ENCODE measurements at regions of chr9 and their contacts with region 1.

Region 1: GRCh38 chr9:124126571-124127289 is 115.2 kb downstream of the LHX2 start:
- DNase-seq: peak; percentile 43
- ATAC-seq: peak; percentile 85
- H3K4me3 ChIP-seq: no peak overlapping the region
- H3K27ac ChIP-seq: no peak overlapping the region
- H3K4me1 ChIP-seq: peaks cover 8% of the 10 kb centered on the region; the same call in 1 of the 2 replicates
- H3K27me3 ChIP-seq: no peaks in the 10 kb centered on the region
- CTCF ChIP-seq: peak; percentile 94 to 97 (median 95)
- EP300 ChIP-seq: no peak
- POLR2A ChIP-seq: no peak
- RAD21 ChIP-seq: peak; percentile 98

Region 2: DNA sequence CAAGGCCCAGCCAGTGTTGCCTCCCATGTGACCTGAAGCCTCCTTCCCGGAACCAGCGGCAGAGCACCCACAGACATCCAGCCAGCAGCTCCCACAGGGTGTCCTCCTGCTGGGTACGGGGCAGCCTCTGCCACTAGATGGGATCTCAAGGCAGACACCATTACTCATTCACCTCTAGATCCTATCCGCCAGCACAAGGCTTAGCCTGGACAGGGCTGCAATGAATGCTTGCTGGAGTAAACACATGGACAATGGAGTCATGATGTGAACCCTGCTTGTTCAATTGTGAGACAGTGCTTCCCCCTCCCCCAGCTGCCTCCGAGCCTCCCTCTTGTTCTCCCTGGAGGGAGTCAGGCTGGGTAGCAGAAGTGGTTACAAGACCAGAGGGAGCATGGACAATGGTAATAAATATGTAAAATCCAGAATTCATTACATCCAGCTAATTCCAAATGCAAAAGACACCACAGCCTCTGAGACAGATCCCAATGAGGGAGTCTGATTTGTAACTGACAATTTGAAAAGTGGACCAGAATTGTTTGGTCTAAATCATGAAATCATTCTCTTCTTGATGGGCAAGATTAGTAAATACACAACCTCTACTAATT is 638.7 kb before region 1 on chr9:
- CTCF ChIA-PET with region 1: no interaction called
- POLR2A ChIA-PET with region 1: no interaction called
- RAD21 ChIA-PET with region 1: no interaction called
- SMC1A ChIA-PET with region 1: no interaction called
- in situ Hi-C with region 1: no loop called
- intact Hi-C with region 1: no loop called
- DNase-seq: no peak
- ATAC-seq: no peak
- H3K4me3 ChIP-seq: no peak overlapping the region
- H3K27ac ChIP-seq: no peak overlapping the region
- H3K4me1 ChIP-seq: no peaks in the 10 kb centered on the region
- H3K27me3 ChIP-seq: no peaks in the 10 kb centered on the region
- CTCF ChIP-seq: no peak
- EP300 ChIP-seq: no peak
- POLR2A ChIP-seq: no peak
- RAD21 ChIP-seq: no peak

Region 3: GRCh38 chr9:124202447-124202971 is 75.8 kb after region 1 on chr9:
- CTCF ChIA-PET with region 1: interaction called, 41 read pairs
- POLR2A ChIA-PET with region 1: interaction called, 3 read pairs
- RAD21 ChIA-PET with region 1: interaction called, 18 read pairs
- SMC1A ChIA-PET with region 1: interaction called, 25 read pairs
- in situ Hi-C with region 1: no loop called
- intact Hi-C with region 1: no loop called
- DNase-seq: peak; percentile 98
- ATAC-seq: peak; percentile 83
- H3K4me3 ChIP-seq: peak overlapping the region; percentile 37; the same call in 1 of the 2 replicates
- H3K27ac ChIP-seq: peak overlapping the region; percentile 99
- H3K4me1 ChIP-seq: peaks cover 77% of the 10 kb centered on the region
- H3K27me3 ChIP-seq: no peaks in the 10 kb centered on the region
- CTCF ChIP-seq: 0 out of 6 replicates have a peak, but pooled peaks of 1 of the 3 experiments have one; percentile 5
- EP300 ChIP-seq: peak; percentile 84 to 98; a peak in 3 of 4 replicates
- POLR2A ChIP-seq: peak; percentile 64; the same call in 1 of the 2 replicates
- RAD21 ChIP-seq: peak; percentile 49

Region 4: DNA sequence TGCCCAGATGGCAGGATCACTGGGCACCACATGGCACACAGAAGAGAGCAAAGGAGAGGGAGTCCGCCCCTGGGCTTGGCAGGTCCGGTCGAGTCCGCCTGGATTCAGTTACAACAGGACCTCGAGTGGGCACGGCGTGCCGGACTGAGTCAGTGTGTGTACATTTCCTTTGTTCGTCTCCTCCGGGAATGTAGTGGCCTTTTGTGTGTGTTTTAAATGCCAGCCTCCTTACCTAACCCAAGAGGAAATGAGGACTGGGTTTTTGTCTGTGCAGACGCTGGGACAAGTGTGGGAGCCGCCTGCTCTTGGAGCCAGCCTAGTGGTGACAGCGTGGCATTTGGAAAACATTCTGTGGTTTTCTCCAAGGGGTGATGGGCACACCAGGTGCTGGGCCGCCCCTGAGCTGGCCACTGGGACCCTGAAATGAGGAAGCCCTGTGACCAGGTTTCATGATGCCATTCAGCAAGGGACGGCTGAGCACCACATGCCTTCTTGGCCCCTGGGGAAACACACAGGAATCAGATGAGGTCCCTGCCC is 140.6 kb after region 1 on chr9:
- CTCF ChIA-PET with region 1: interaction called, 18 read pairs
- POLR2A ChIA-PET with region 1: interaction called, 3 read pairs
- RAD21 ChIA-PET with region 1: interaction called, 12 read pairs
- SMC1A ChIA-PET with region 1: interaction called, 4 read pairs
- in situ Hi-C with region 1: no loop called
- intact Hi-C with region 1: no loop called
- DNase-seq: no peak
- ATAC-seq: peak; percentile 8
- H3K4me3 ChIP-seq: peak overlapping the region; percentile 61; the same call in 1 of the 2 replicates
- H3K27ac ChIP-seq: peak overlapping the region; percentile 7
- H3K4me1 ChIP-seq: peaks cover 44% of the 10 kb centered on the region
- H3K27me3 ChIP-seq: no peaks in the 10 kb centered on the region
- CTCF ChIP-seq: 0 out of 6 replicates have a peak, but pooled peaks of 1 of the 3 experiments have one; percentile 8
- EP300 ChIP-seq: no peak
- POLR2A ChIP-seq: peak; percentile 18
- RAD21 ChIP-seq: no peak

Region 5: DNA sequence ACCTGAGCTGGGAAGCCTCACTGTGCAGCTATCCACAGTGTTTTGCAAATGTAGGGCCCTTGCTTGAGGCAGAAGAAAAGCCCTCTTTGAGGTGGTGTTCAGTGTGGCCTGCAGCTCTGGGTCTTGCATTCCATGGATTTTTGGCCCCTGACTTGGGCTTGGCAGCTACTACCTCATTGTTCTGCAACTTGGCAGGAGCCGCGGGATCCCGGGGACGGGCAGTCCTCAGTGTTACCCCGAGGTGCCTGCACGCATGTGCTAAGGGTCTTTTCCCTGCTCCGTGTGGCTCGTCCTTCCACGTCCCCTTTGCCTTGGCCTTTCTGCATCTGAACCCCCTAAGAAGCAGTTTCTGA is 170.8 kb after region 1 on chr9:
- CTCF ChIA-PET with region 1: interaction called, 42 read pairs
- POLR2A ChIA-PET with region 1: interaction called, 5 read pairs
- RAD21 ChIA-PET with region 1: interaction called, 24 read pairs
- SMC1A ChIA-PET with region 1: interaction called, 18 read pairs
- in situ Hi-C with region 1: loop called (anchors 25 kb)
- intact Hi-C with region 1: no loop called
- DNase-seq: no peak
- ATAC-seq: no peak
- H3K4me3 ChIP-seq: no peak overlapping the region
- H3K27ac ChIP-seq: no peak overlapping the region
- H3K4me1 ChIP-seq: peaks cover 52% of the 10 kb centered on the region
- H3K27me3 ChIP-seq: no peaks in the 10 kb centered on the region
- CTCF ChIP-seq: no peak
- EP300 ChIP-seq: no peak
- POLR2A ChIP-seq: no peak
- RAD21 ChIP-seq: no peak

Region 6: DNA sequence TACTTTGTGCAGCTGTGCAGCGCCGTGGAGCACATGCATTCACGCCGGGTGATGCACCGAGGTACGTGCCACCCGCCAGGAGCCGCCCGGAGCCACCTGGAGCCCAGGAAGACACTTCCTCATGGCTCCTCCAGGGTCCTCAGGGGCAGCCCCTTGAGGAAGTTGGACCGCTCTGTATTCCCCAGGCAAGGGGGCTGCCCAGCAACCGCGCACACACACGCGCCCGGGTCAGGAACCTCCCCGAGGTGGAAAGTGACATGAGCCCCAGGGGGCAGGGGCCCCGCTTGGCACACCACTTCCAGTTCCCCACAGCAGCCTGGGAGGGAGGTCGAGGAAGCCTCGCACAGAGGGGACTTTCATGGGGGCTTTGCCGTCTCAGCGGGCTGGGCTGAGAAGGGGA is 199.6 kb after region 1 on chr9:
- CTCF ChIA-PET with region 1: interaction called, 17 read pairs
- POLR2A ChIA-PET with region 1: no interaction called
- RAD21 ChIA-PET with region 1: interaction called, 14 read pairs
- SMC1A ChIA-PET with region 1: interaction called, 8 read pairs
- in situ Hi-C with region 1: no loop called
- intact Hi-C with region 1: loop called (anchors 2 kb)
- DNase-seq: no peak
- ATAC-seq: no peak; the same call in 2 of the 3 replicates
- H3K4me3 ChIP-seq: no peak overlapping the region
- H3K27ac ChIP-seq: no peak overlapping the region
- H3K4me1 ChIP-seq: peaks cover 8% of the 10 kb centered on the region
- H3K27me3 ChIP-seq: no peaks in the 10 kb centered on the region
- CTCF ChIP-seq: no peak
- EP300 ChIP-seq: no peak
- POLR2A ChIP-seq: no peak
- RAD21 ChIP-seq: no peak

Region 7: GRCh38 chr9:124392871-124393460 is 266.2 kb after region 1 on chr9:
- CTCF ChIA-PET with region 1: interaction called, 33 read pairs
- POLR2A ChIA-PET with region 1: no interaction called
- RAD21 ChIA-PET with region 1: interaction called, 12 read pairs
- SMC1A ChIA-PET with region 1: interaction called, 12 read pairs
- in situ Hi-C with region 1: no loop called
- intact Hi-C with region 1: loop called (anchors 10 kb)
- DNase-seq: no peak
- ATAC-seq: no peak
- H3K4me3 ChIP-seq: no peak overlapping the region
- H3K27ac ChIP-seq: no peak overlapping the region
- H3K4me1 ChIP-seq: peaks cover 5% of the 10 kb centered on the region; the same call in 1 of the 2 replicates
- H3K27me3 ChIP-seq: no peaks in the 10 kb centered on the region
- CTCF ChIP-seq: no peak
- EP300 ChIP-seq: no peak
- POLR2A ChIP-seq: no peak
- RAD21 ChIP-seq: no peak